ENCODE measurements at regions of chr1 and their contacts with region 1.

Region 1: GRCh38 chr1:222455188-222455879 is 92.6 kb downstream of the HHIPL2 start:
- DNase-seq: peak; percentile 93
- H3K4me3 ChIP-seq: peak overlapping the region in 1 of 8 donors; percentile 28
- H3K27ac ChIP-seq: peak overlapping the region in 7 of 8 donors; percentile 33 to 75 (median 61)
- H3K4me1 ChIP-seq: peaks cover 5 to 16% (median 12%) of the 10 kb centered on the region in 6 donors
- H3K27me3 ChIP-seq: peaks cover 0 to 2% (median 0%) of the 10 kb centered on the region in 7 donors
- CTCF ChIP-seq: peak; percentile 75 to 94 (median 90)
- POLR2A ChIP-seq: no peak

Region 2: GRCh38 chr1:221478050-221478949 is 977.0 kb before region 1 on chr1:
- intact Hi-C with region 1: loop called (anchors 10 kb)
- DNase-seq: no peak
- H3K4me3 ChIP-seq: no peak overlapping the region
- H3K27ac ChIP-seq: no peak overlapping the region
- H3K4me1 ChIP-seq: peaks cover 0 to 6% (median 0%) of the 10 kb centered on the region in 6 donors
- H3K27me3 ChIP-seq: peaks cover 0 to under 1% (median 0%) of the 10 kb centered on the region in 7 donors
- CTCF ChIP-seq: peak; percentile 6 to 64 (median 38)
- POLR2A ChIP-seq: no peak

Region 3: GRCh38 chr1:222095606-222096475 is 359.5 kb before region 1 on chr1:
- intact Hi-C with region 1: loop called (anchors 5 kb)
- DNase-seq: no peak
- H3K4me3 ChIP-seq: no peak overlapping the region
- H3K27ac ChIP-seq: no peak overlapping the region
- H3K4me1 ChIP-seq: no peaks in the 10 kb centered on the region
- H3K27me3 ChIP-seq: no peaks in the 10 kb centered on the region
- CTCF ChIP-seq: peak; percentile 50 to 91 (median 81)
- POLR2A ChIP-seq: no peak